Activated CD4-positive, alpha-beta memory T cell treated with anti-CD3 and anti-CD28 coated beads for 36 hours (primary cell): ENCODE measurements at regions of chr2 and their contacts with region 1.

Region 1: DNA sequence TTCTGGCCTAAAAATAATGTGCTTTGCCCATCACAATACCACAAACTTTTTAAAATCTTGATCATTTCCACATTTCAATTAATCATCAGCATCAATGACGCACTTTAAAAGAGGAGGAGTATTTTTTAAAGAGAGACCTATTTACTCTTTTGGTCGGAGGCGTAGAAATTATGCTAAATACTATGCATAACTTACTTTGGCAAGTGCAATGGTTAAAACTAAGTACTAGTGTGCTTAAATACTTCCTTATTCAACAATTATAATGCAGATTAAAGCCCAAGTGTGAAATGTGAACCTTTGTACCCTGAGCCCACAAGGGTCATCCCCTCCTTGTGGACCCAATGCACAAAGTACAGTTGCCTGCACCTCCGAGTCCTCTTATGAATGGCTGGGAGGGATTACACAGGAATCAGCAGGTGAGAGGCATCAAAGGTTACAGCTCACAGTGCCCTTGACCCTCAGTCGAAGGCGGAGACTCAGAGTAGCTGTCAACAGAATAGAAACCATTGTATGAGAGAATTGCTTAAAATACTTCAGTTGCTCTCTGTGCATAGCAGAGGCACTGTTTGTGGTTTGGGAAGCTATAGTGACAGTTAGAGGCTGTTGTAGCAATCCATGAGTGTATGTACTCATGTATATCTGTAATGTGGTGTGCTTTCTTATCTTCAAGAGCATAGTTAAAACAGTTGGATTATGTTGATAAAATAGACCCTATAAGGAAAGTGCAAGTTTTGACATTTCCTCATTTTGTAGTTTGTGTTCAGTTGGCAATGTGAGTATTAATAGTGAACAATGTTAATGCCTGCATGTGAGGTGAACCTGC is 151.7 kb upstream of the ITGA4 start:
- DNase-seq: peak; percentile 69
- H3K4me3 Mint-ChIP-seq: peak overlapping the region; percentile 48
- H3K27ac Mint-ChIP-seq: peak overlapping the region; percentile 97
- H3K4me1 Mint-ChIP-seq: peaks cover 74% of the 10 kb centered on the region
- H3K27me3 Mint-ChIP-seq: no peaks in the 10 kb centered on the region

Region 2: DNA sequence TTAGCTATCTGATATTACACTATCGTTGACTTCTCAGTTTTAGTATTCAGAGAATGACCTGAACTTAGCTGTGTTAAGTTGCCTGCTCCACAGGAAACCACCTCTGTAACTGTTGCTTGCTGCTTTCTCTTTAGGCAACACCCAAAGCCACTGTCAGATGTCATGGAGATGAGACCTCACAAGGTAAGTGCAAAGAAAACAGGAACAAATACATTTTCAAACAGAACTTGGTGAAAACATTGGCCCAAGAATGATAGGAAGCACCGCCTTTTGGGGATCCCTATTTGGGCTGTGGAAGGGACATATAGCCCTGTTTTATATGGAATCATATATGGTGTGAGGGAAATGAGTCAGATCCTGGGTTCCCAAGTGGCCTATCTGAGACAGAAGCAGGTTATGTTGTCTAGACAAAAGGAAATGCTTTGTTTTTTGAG is 181.7 kb before region 1 on chr2:
- CTCF ChIA-PET with region 1: no interaction called
- POLR2A ChIA-PET with region 1: interaction called, 3 read pairs
- intact Hi-C with region 1: loop called (anchors 1 kb)
- DNase-seq: peak; percentile 67
- H3K4me3 Mint-ChIP-seq: peak overlapping the region; percentile 74
- H3K27ac Mint-ChIP-seq: peak overlapping the region; percentile 92
- H3K4me1 Mint-ChIP-seq: peaks cover 60% of the 10 kb centered on the region
- H3K27me3 Mint-ChIP-seq: no peaks in the 10 kb centered on the region

Region 3: GRCh38 chr2:181224866-181225265 is 80.6 kb before region 1 on chr2:
- CTCF ChIA-PET with region 1: no interaction called
- POLR2A ChIA-PET with region 1: no interaction called
- intact Hi-C with region 1: loop called (anchors 2 kb)
- DNase-seq: no peak
- H3K4me3 Mint-ChIP-seq: peak overlapping the region; percentile 59
- H3K27ac Mint-ChIP-seq: peak overlapping the region; percentile 87
- H3K4me1 Mint-ChIP-seq: peaks cover 24% of the 10 kb centered on the region
- H3K27me3 Mint-ChIP-seq: no peaks in the 10 kb centered on the region

Region 4: GRCh38 chr2:181281206-181281832 is 24.2 kb before region 1 on chr2:
- CTCF ChIA-PET with region 1: no interaction called
- POLR2A ChIA-PET with region 1: no interaction called
- intact Hi-C with region 1: loop called (anchors 2 kb)
- DNase-seq: no peak
- H3K4me3 Mint-ChIP-seq: no peak overlapping the region
- H3K27ac Mint-ChIP-seq: peak overlapping the region; percentile 67
- H3K4me1 Mint-ChIP-seq: peaks cover 28% of the 10 kb centered on the region
- H3K27me3 Mint-ChIP-seq: no peaks in the 10 kb centered on the region

Region 5: GRCh38 chr2:181715033-181715630 is 409.6 kb after region 1 on chr2:
- CTCF ChIA-PET with region 1: no interaction called
- POLR2A ChIA-PET with region 1: no interaction called
- intact Hi-C with region 1: loop called (anchors 10 kb)
- DNase-seq: peak; percentile 75
- H3K4me3 Mint-ChIP-seq: no peak overlapping the region
- H3K27ac Mint-ChIP-seq: no peak overlapping the region
- H3K4me1 Mint-ChIP-seq: no peaks in the 10 kb centered on the region
- H3K27me3 Mint-ChIP-seq: no peaks in the 10 kb centered on the region